T-cell (primary cell): ENCODE measurements at regions of chr22 and their contacts with region 1.

Region 1: DNA sequence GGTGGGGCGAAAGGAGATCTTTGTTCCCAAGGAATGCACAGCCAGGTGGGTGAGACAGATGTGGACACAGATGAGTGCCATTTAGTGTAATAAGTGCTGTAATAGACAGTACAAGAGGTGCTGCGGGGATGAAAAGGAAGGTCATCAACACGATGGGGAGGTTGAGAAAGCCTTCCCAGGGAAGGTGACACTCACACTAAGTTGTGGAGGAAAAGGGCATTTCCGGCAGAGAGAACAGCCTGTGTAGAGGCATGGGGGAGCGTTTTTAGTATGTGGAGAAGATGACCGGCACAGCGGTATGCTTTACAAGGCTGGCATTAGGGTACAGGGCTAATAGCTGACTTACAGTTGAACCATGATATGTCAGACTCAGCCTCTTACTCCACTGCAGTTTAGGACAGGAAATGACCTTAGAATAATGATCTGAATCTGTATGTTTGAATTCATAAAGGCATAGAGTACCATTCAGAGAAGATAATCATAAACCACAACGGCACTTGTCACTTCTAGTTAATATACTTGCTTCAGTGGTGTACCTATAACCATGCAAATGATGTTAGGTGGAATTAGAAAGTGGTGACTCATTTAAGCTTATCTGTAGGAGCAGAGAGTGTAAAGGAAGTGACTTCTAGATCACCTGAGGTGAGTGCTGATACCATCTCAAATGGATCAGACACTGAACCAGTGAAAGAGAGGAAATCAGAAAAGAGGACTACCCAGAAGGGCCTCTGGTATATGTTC is 60.6 kb downstream of the FAM83F start:
- DNase-seq: peak in 4 of 35 experiments; percentile 6 to 69 (median 12)
- ATAC-seq: peak; percentile 90 to 96 (median 93)
- H3K4me3 ChIP-seq: peak overlapping the region in 1 of 2 donors; percentile 12
- H3K4me3 Mint-ChIP-seq: peak overlapping the region; percentile 61 to 77 (median 67)
- H3K27ac ChIP-seq: peak overlapping the region; percentile 37
- H3K27ac Mint-ChIP-seq: peak overlapping the region; percentile 87 to 92
- H3K4me1 ChIP-seq: peaks cover 50 to 57% of the 10 kb centered on the region in 2 experiments
- H3K4me1 Mint-ChIP-seq: peaks cover 82 to 88% (median 84%) of the 10 kb centered on the region in 3 donors
- H3K27me3 ChIP-seq: no peaks in the 10 kb centered on the region
- H3K27me3 Mint-ChIP-seq: no peaks in the 10 kb centered on the region

Region 2: DNA sequence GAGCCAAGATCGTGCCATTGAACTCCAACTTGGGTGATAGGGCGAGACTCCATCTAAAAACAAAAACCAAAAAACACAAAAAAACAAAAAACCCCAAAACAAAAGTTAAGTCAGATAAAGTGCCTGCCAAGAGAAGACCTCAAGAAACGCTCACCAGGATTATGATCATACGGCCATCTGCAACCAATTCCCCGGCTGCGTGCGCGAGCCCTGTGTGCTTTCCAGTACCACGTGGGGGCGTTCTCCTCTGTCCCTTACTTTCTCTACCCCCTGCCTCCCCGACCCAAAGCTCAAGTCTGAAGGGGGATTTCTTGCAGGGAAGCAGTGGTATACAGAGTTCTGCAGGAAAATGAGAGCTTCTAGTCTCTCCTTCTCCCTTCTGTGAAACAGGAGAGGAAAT is 512.2 kb before region 1 on chr22:
- CTCF ChIA-PET with region 1: no interaction called
- POLR2A ChIA-PET with region 1: interaction called in 1 of 2 experiments, 13 read pairs
- DNase-seq: peak in 3 of 35 experiments; percentile 20 to 48 (median 29)
- ATAC-seq: peak in 1 of 4 experiments; percentile 51
- H3K4me3 ChIP-seq: no peak overlapping the region
- H3K4me3 Mint-ChIP-seq: no peak overlapping the region
- H3K27ac ChIP-seq: no peak overlapping the region
- H3K27ac Mint-ChIP-seq: no peak overlapping the region
- H3K4me1 ChIP-seq: peaks cover 0 to 26% of the 10 kb centered on the region in 2 experiments
- H3K4me1 Mint-ChIP-seq: peaks cover 17 to 21% (median 20%) of the 10 kb centered on the region in 3 donors
- H3K27me3 ChIP-seq: peaks cover 0 to 42% of the 10 kb centered on the region in 2 experiments
- H3K27me3 Mint-ChIP-seq: peaks cover 20 to 34% of the 10 kb centered on the region in 2 donors

Region 3: DNA sequence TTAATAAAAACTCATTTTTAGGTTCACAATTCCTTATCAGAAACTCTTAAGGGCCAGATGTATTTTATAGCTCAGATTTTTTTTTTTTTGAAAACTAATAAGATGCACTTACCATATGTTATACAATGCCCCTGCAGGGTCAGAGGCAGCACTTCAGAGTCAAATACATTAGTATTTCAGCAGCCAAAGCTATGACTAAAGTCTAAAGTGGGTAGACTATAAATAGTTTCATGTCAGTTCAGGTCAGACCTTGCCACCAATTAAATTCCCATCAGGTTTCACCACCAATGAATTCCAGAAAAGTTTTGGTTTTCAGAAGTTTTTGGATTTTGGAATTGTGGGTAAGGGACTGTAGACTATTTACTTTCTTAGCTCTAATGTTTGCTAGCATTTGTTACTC is 15.4 kb after region 1 on chr22:
- CTCF ChIA-PET with region 1: interaction called in 1 of 2 experiments, 7 read pairs
- POLR2A ChIA-PET with region 1: interaction called, 4 to 10 read pairs
- DNase-seq: no peak
- ATAC-seq: no peak
- H3K4me3 ChIP-seq: no peak overlapping the region
- H3K4me3 Mint-ChIP-seq: no peak overlapping the region
- H3K27ac ChIP-seq: no peak overlapping the region
- H3K27ac Mint-ChIP-seq: no peak overlapping the region
- H3K4me1 ChIP-seq: peaks cover 15 to 24% of the 10 kb centered on the region in 2 experiments
- H3K4me1 Mint-ChIP-seq: peaks cover 76 to 83% (median 77%) of the 10 kb centered on the region in 3 donors
- H3K27me3 ChIP-seq: no peaks in the 10 kb centered on the region
- H3K27me3 Mint-ChIP-seq: no peaks in the 10 kb centered on the region

Region 4: GRCh38 chr22:40081662-40082061 is 26.3 kb after region 1 on chr22:
- CTCF ChIA-PET with region 1: no interaction called
- POLR2A ChIA-PET with region 1: no interaction called
- DNase-seq: no peak
- ATAC-seq: no peak
- H3K4me3 ChIP-seq: no peak overlapping the region
- H3K4me3 Mint-ChIP-seq: no peak overlapping the region
- H3K27ac ChIP-seq: no peak overlapping the region
- H3K27ac Mint-ChIP-seq: no peak overlapping the region
- H3K4me1 ChIP-seq: peaks cover 14 to 41% of the 10 kb centered on the region in 2 experiments
- H3K4me1 Mint-ChIP-seq: peaks cover 26 to 34% (median 29%) of the 10 kb centered on the region in 3 donors
- H3K27me3 ChIP-seq: no peaks in the 10 kb centered on the region
- H3K27me3 Mint-ChIP-seq: no peaks in the 10 kb centered on the region

Region 5: DNA sequence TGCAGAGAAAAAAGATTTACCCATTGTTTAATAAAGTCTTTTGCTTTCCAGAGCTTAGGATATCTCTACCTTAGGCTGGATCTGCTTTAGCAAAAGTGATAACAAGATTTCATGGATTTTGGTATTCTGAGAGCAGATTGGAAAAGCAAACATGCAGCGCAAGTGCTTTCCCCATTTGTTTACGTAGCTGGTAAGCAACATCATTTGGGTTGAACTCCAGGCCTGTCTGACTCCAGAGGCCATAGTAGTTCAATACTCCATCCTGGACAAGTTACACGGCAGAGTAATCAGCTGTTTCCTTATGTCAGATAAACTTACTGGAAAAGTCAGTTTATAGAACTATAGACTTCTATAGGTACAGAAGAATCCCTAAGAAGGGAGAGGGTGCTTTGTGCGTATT is 81.8 kb after region 1 on chr22:
- CTCF ChIA-PET with region 1: no interaction called
- POLR2A ChIA-PET with region 1: no interaction called
- DNase-seq: no peak
- ATAC-seq: no peak
- H3K4me3 ChIP-seq: no peak overlapping the region
- H3K4me3 Mint-ChIP-seq: no peak overlapping the region
- H3K27ac ChIP-seq: no peak overlapping the region
- H3K27ac Mint-ChIP-seq: peak overlapping the region in 1 of 2 donors; percentile 3
- H3K4me1 ChIP-seq: no peaks in the 10 kb centered on the region
- H3K4me1 Mint-ChIP-seq: peaks cover 11 to 31% (median 22%) of the 10 kb centered on the region in 3 donors
- H3K27me3 ChIP-seq: no peaks in the 10 kb centered on the region
- H3K27me3 Mint-ChIP-seq: no peaks in the 10 kb centered on the region